ENCODE measurements at regions of chr1 and their contacts with region 1.

Region 1: DNA sequence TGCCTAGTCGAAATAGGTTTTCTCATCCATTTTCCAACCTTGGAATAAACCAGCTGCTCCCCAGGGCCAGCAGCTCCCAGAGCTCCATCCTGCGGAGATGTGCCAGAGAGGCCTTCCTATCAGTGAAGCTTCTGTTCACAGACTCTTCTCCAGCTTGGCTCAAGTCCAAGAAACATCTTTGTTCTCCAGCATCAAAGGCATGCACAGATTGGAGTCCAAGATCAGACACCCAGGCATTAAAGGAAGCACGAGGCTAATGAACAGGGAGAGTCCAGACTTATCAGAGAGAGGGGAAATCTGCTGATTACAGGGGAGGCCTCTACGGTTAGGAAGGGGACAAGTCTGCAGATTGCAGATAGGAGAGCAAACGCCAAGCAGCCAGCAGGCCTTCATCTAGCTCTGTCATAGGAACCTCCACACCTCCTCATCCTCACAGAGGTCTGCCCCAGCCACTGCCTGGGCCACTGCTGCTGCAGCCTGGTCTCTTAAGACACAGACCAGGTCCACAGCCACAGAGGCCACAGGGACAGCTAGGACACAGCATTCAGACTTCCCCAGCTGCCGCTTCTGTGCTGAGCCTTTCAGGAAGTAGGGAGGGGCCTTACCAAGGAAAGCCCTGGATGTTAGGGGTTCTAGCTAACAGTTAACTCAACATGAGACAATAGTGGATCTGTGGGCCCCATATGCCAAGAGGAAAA is 3.4 kb downstream of the PRR9 start:
- DNase-seq: no peak
- ATAC-seq: no peak
- H3K4me3 Mint-ChIP-seq: no peak overlapping the region
- H3K27ac Mint-ChIP-seq: no peak overlapping the region
- H3K4me1 Mint-ChIP-seq: no peaks in the 10 kb centered on the region
- H3K27me3 Mint-ChIP-seq: peaks cover 2% of the 10 kb centered on the region; the same call in 1 of the 2 replicates
- CTCF ChIP-seq: no peak

Region 2: DNA sequence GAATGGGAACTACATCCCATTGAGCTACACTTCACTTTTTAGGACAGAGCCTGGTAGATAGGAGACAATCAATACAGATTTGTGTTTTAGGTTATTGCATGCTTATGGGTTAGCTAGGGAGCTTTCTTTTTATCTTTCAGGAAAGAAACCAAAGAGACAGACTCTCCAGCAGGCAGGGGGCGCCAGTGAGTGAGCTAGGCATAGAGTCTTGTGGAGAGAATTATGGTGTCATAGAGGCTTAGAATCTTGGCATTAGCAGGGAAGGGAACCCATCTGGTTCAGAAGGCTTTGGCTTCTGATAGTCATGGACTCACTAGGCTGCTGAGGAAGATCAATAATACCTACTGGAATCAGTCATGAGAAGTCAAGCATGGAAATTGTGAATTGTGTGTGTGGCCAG is 342.7 kb before region 1 on chr1 and contains the start of gene SMCP:
- CTCF ChIA-PET with region 1: interaction called, 12 read pairs
- POLR2A ChIA-PET with region 1: no interaction called
- DNase-seq: peak; percentile 75
- ATAC-seq: no peak
- H3K4me3 Mint-ChIP-seq: no peak within 1 kb of the TSS
- H3K27ac Mint-ChIP-seq: no peak within 1 kb of the TSS
- H3K4me1 Mint-ChIP-seq: no peaks in the 10 kb centered on the region
- H3K27me3 Mint-ChIP-seq: no peaks in the 10 kb centered on the region; the same call in 1 of the 2 replicates
- CTCF ChIP-seq: peak; percentile 47
- total RNA-seq, gene SMCP: not detected in 3 replicates

Region 3: GRCh38 chr1:152917794-152918193 is 303.0 kb before region 1 on chr1:
- CTCF ChIA-PET with region 1: interaction called, 15 read pairs
- POLR2A ChIA-PET with region 1: no interaction called
- DNase-seq: no peak
- ATAC-seq: peak; percentile 43
- H3K4me3 Mint-ChIP-seq: no peak overlapping the region
- H3K27ac Mint-ChIP-seq: no peak overlapping the region
- H3K4me1 Mint-ChIP-seq: peaks cover 5% of the 10 kb centered on the region
- H3K27me3 Mint-ChIP-seq: peaks cover 6% of the 10 kb centered on the region
- CTCF ChIP-seq: no peak

Region 4: DNA sequence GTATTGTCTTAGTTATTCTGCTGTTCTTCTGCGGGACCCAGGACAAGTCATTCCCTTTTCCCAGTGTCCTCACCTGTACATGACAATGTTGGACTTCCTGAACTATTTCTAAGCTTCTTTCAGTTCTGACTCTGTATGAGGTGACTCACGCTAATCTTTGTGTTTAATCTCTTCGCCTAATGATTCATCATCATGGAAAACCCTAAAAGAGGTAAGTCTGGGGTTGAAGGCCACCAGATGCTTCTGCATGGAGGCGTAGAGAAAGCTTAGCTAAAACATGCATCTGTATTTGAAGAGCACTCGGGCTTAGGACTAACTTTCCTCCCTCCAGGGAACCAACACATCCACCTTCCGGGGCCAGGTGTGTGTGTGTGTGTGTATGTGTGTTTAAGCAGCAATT is 266.3 kb before region 1 on chr1:
- CTCF ChIA-PET with region 1: no interaction called
- POLR2A ChIA-PET with region 1: no interaction called
- DNase-seq: no peak
- ATAC-seq: no peak
- H3K4me3 Mint-ChIP-seq: no peak overlapping the region
- H3K27ac Mint-ChIP-seq: no peak overlapping the region
- H3K4me1 Mint-ChIP-seq: no peaks in the 10 kb centered on the region
- H3K27me3 Mint-ChIP-seq: peaks cover 4% of the 10 kb centered on the region
- CTCF ChIP-seq: no peak

Region 5: DNA sequence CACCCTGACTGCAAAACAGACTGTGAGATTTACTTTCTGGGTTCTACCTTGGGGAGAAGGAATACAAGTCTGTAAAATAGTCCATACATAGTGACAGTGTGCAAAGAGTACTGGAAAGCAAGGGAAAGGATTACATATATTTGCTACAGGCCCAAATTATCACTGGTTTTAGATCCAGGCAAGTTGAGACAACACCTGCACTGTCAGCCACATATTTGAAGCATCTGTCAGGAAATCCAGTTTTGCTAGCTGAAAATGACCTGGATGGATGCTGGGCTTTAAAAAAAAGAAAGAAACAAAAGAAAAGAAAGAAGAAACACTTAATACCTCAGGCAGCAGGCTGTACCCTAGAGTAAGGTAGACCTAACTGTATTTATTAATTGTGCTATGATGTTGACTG is 46.1 kb before region 1 on chr1:
- CTCF ChIA-PET with region 1: no interaction called
- POLR2A ChIA-PET with region 1: no interaction called
- DNase-seq: no peak
- ATAC-seq: no peak
- H3K4me3 Mint-ChIP-seq: no peak overlapping the region
- H3K27ac Mint-ChIP-seq: no peak overlapping the region
- H3K4me1 Mint-ChIP-seq: no peaks in the 10 kb centered on the region
- H3K27me3 Mint-ChIP-seq: peaks cover 6% of the 10 kb centered on the region
- CTCF ChIP-seq: no peak